ENCODE measurements at regions of chr5 and their contacts with region 1.

Region 1: GRCh38 chr5:163269624-163270023 is 167.8 kb upstream of the CCNG1 start:
- DNase-seq: peak in 1 of 2 experiments; percentile 7
- H3K4me3 ChIP-seq: no peak overlapping the region
- H3K4me3 Mint-ChIP-seq: no peak overlapping the region
- H3K27ac Mint-ChIP-seq: no peak overlapping the region
- H3K4me1 ChIP-seq: no peaks in the 10 kb centered on the region
- H3K4me1 Mint-ChIP-seq: no peaks in the 10 kb centered on the region
- H3K27me3 ChIP-seq: no peaks in the 10 kb centered on the region
- H3K27me3 Mint-ChIP-seq: peaks cover 5% of the 10 kb centered on the region
- CTCF ChIP-seq: peak in 1 of 2 experiments; percentile 18

Region 2: DNA sequence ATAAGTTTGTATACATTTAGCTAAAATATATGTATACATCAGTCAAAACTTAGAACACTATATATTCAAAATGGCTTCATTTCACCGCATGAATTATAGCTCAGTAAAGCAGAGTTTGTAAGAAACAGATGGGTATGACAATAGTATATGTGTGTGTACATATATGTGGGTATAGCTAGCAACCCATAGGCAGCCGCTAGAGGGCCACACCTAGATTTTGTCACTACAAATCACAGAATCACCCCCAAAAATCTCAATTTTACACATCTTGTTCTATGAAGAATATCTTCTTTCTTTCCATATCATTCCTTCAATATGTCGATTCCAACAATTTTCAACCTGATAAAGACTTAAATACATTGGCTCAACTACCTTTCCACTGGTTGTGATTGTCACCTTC is 190.0 kb before region 1 on chr5:
- CTCF ChIA-PET with region 1: no interaction called
- POLR2A ChIA-PET with region 1: no interaction called
- intact Hi-C with region 1: loop called (anchors 1 kb)
- DNase-seq: peak in 1 of 2 experiments; percentile 24
- H3K4me3 ChIP-seq: no peak overlapping the region
- H3K4me3 Mint-ChIP-seq: no peak overlapping the region
- H3K27ac Mint-ChIP-seq: no peak overlapping the region
- H3K4me1 ChIP-seq: no peaks in the 10 kb centered on the region
- H3K4me1 Mint-ChIP-seq: no peaks in the 10 kb centered on the region
- H3K27me3 ChIP-seq: no peaks in the 10 kb centered on the region
- H3K27me3 Mint-ChIP-seq: no peaks in the 10 kb centered on the region
- CTCF ChIP-seq: peak; percentile 45 to 51

Region 3: DNA sequence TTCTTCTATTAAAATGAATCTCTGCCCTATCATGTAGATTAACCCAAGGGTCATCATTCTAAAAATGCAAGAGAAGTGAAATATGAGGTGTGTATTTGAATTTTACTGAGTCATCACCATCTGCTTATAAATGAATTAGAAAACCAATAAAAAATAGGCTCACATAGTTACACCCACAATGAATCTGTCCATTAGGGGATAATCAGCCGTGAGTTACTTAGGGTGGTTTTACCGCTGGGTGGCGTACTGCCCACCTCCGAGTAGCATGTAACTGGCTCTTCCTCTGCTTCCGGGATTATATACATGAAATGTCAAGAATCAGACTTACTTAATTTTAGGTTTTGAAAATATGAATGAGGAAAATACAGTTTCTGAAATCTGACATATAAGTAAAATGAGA is 165.2 kb before region 1 on chr5:
- CTCF ChIA-PET with region 1: no interaction called
- POLR2A ChIA-PET with region 1: no interaction called
- intact Hi-C with region 1: loop called (anchors 1 kb)
- DNase-seq: peak in 1 of 2 experiments; percentile 18
- H3K4me3 ChIP-seq: no peak overlapping the region
- H3K4me3 Mint-ChIP-seq: no peak overlapping the region
- H3K27ac Mint-ChIP-seq: no peak overlapping the region
- H3K4me1 ChIP-seq: no peaks in the 10 kb centered on the region
- H3K4me1 Mint-ChIP-seq: no peaks in the 10 kb centered on the region
- H3K27me3 ChIP-seq: no peaks in the 10 kb centered on the region
- H3K27me3 Mint-ChIP-seq: peaks cover 5% of the 10 kb centered on the region
- CTCF ChIP-seq: peak; percentile 18 to 27

Region 4: GRCh38 chr5:163221581-163221980 is 48.0 kb before region 1 on chr5:
- CTCF ChIA-PET with region 1: no interaction called
- POLR2A ChIA-PET with region 1: no interaction called
- intact Hi-C with region 1: no loop called
- DNase-seq: no peak
- H3K4me3 ChIP-seq: no peak overlapping the region
- H3K4me3 Mint-ChIP-seq: no peak overlapping the region
- H3K27ac Mint-ChIP-seq: no peak overlapping the region
- H3K4me1 ChIP-seq: no peaks in the 10 kb centered on the region
- H3K4me1 Mint-ChIP-seq: no peaks in the 10 kb centered on the region
- H3K27me3 ChIP-seq: no peaks in the 10 kb centered on the region
- H3K27me3 Mint-ChIP-seq: peaks cover 2% of the 10 kb centered on the region
- CTCF ChIP-seq: no peak

Region 5: DNA sequence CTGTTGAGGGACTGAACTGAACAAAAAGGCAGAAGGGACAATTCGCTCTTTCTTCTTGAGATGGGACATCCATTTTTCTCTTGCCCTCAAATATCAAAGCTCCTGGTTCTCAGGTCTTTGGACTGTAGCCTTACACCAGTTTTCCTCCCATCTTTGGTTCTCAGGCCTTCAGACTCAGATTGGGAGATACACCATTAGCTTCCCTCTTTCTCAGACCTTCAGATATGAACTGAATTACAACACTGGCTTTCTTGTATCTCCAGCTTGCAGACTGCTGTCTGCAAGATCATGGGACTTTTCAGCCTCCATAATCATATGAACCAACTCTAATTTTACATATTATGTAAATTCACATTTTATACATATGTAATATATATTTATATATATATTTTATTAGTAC is 155.2 kb after region 1 on chr5:
- CTCF ChIA-PET with region 1: no interaction called
- POLR2A ChIA-PET with region 1: no interaction called
- intact Hi-C with region 1: no loop called
- DNase-seq: no peak
- H3K4me3 ChIP-seq: no peak overlapping the region
- H3K4me3 Mint-ChIP-seq: no peak overlapping the region
- H3K27ac Mint-ChIP-seq: no peak overlapping the region
- H3K4me1 ChIP-seq: no peaks in the 10 kb centered on the region
- H3K4me1 Mint-ChIP-seq: no peaks in the 10 kb centered on the region
- H3K27me3 ChIP-seq: no peaks in the 10 kb centered on the region
- H3K27me3 Mint-ChIP-seq: no peaks in the 10 kb centered on the region
- CTCF ChIP-seq: no peak